IMR-90 (cell line): ENCODE measurements at regions of chr1 and their contacts with region 1.

Region 1: DNA sequence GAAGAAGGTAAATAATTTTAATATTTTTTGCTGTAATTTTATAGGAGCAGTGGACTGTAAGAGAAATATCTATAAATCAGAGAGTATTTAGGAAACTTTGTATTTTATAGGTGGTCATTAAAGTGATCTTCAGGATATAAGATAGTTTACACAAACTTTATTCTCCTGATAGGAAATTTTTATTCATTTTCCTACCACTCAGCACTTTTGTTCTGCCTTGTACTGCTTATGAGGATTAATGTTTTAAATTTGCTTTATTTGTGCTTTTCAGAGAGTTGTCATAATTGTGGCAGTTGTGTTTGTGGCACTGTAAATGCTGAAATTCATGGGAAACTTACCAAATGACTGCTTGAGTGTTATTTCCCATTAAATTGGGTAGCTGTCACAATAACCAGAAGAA is 29.7 kb downstream of the UHMK1 start:
- DNase-seq: no peak
- ATAC-seq: no peak
- H3K4me3 ChIP-seq: no peak overlapping the region
- H3K27ac ChIP-seq: no peak overlapping the region
- H3K4me1 ChIP-seq: peaks cover 5% of the 10 kb centered on the region
- H3K27me3 ChIP-seq: no peaks in the 10 kb centered on the region
- CTCF ChIP-seq: no peak
- POLR2A ChIP-seq: no peak
- RAD21 ChIP-seq: no peak

Region 2: DNA sequence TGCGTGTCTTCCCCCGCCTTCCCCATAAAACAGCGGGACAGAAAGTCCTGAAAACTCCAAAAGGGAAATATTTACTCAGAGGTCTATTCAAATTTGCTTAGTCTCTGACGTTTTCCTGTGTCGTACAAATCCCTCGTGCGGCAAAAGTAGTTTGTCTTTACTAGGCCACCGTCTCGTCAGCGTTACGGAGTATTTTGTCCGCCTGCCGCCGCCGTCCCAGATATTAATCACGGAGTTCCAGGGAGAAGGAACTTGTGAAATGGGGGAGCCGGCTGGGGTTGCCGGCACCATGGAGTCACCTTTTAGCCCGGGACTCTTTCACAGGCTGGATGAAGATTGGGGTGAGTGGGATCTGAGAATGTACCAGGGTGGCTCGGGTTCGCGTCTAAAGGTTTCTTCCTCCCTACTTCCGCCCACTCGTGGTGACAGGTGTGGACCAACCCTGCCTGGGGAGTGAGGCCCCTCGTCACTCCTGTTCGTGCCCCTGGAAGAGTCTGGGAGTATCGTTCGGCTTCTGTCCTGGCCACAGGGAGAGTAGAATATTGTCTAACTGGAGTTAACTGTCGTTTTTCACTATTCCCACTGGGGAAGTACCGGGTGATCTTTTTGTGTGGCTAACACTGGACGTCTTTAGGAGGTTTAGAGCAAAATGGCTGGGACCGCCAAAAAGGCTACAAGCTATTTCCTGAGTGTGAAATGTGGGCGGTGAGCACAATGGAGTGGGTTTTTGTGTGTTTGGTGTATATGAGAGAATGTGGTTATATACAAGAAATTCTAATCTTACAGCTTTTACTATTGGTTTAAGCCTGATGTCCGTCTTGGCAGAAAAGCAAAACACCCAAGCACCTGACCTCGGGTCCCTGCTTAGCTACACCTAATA is 761.0 kb before region 1 on chr1 and contains the start of gene ATF6:
- CTCF ChIA-PET with region 1: no interaction called
- POLR2A ChIA-PET with region 1: no interaction called
- dilution Hi-C with region 1: no loop called
- in situ Hi-C with region 1: no loop called
- intact Hi-C with region 1: loop called (anchors 10 kb)
- DNase-seq: peak; percentile 94
- ATAC-seq: peak; percentile 95
- H3K4me3 ChIP-seq: peak within 1 kb of the TSS; percentile 91
- H3K27ac ChIP-seq: peak within 1 kb of the TSS; percentile 93
- H3K4me1 ChIP-seq: no peaks in the 10 kb centered on the region
- H3K27me3 ChIP-seq: no peaks in the 10 kb centered on the region
- CTCF ChIP-seq: no peak
- POLR2A ChIP-seq: peak; percentile 84
- RAD21 ChIP-seq: no peak
- total RNA-seq, gene ATF6: 17.6 and 17.8 TPM in 2 replicates

Region 3: GRCh38 chr1:162561037-162561616 is 33.8 kb after region 1 on chr1:
- CTCF ChIA-PET with region 1: no interaction called
- POLR2A ChIA-PET with region 1: no interaction called
- dilution Hi-C with region 1: no loop called
- in situ Hi-C with region 1: no loop called
- intact Hi-C with region 1: loop called (anchors 5 kb)
- DNase-seq: peak; percentile 96
- ATAC-seq: peak; percentile 97
- H3K4me3 ChIP-seq: peak overlapping the region; percentile 94
- H3K27ac ChIP-seq: peak overlapping the region; percentile 79
- H3K4me1 ChIP-seq: peaks cover 10% of the 10 kb centered on the region
- H3K27me3 ChIP-seq: no peaks in the 10 kb centered on the region
- CTCF ChIP-seq: no peak
- POLR2A ChIP-seq: peak; percentile 90
- RAD21 ChIP-seq: peak; percentile 5; the same call in 1 of the 2 replicates

Region 4: DNA sequence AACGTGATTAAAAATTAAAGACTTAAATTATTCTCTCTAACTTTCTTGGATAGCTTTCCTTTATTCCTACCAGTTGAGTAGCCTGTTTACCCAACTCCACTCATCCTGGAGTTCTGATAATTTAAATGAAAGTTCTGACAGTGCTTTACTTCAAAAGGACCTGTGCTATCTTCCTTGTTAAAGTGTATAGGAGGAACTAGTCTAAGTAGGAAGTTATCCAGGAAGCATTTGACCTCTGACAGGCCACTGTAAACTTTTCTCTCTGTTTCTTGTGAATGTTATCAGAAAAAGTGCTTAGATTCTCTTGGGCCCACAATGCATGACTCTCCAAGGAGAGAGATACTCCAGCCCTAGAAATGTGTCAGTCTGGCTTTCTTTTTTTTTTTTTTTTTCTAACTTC is 43.4 kb after region 1 on chr1:
- CTCF ChIA-PET with region 1: interaction called, 7 read pairs
- POLR2A ChIA-PET with region 1: no interaction called
- dilution Hi-C with region 1: no loop called
- in situ Hi-C with region 1: no loop called
- intact Hi-C with region 1: loop called (anchors 1 kb)
- DNase-seq: no peak
- ATAC-seq: no peak
- H3K4me3 ChIP-seq: no peak overlapping the region
- H3K27ac ChIP-seq: no peak overlapping the region
- H3K4me1 ChIP-seq: peaks cover 1% of the 10 kb centered on the region
- H3K27me3 ChIP-seq: no peaks in the 10 kb centered on the region
- CTCF ChIP-seq: no peak
- POLR2A ChIP-seq: no peak
- RAD21 ChIP-seq: no peak